ENCODE measurements at regions of chr6 and their contacts with region 1.

Region 1: DNA sequence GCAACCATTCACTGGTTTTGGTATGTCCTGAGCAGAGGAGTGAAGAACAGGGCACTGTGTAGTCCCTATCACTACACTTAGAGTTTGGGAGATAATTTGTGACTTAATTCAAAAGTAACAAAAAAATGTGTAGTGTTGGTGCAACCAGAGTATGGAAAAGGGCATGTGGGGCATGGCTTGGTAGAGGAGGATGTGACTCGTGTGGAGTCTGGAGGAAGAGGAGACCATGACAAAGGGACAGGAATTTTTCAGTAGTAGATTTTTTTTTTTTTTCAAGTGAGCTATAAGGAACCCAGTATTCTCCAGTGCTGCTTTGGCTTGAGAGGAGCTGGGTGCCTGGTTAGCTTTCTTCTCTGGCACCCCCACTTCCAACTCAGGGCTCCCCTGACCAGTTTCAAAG is 5.1 kb downstream of the MTRES1 start:
- DNase-seq: no peak

Region 2: DNA sequence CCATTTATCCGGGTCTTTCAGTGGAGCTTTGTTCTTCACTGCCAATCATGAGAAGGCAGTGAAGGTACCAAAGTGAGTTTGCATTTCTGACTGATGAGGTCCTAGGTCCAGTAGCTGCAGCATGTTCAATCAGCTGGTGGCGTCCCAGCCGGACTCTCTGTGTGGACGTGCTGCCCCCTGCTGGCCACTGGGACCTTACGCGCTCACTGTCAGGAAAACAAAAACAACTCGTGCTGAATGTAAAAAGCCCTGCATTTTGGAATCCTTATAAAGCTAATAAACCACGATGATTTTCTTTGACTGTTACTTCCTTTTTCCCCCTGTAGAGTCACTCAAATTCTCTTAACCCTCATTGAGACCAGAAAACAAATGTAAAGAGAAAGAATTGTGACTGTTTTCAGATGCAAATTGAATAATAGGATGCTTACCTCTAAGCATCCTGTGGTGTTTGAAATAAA is 53.7 kb before region 1 on chr6:
- intact Hi-C with region 1: no loop called
- DNase-seq: peak; percentile 93

Region 3: GRCh38 chr6:107064579-107065065 is 31.5 kb after region 1 on chr6:
- intact Hi-C with region 1: loop called (anchors 2 kb)
- DNase-seq: no peak

Region 4: GRCh38 chr6:107114213-107114905 is 81.2 kb after region 1 on chr6:
- intact Hi-C with region 1: loop called (anchors 2 kb)
- DNase-seq: peak; percentile 91